ENCODE measurements at regions of chr11 and their contacts with region 1.

Region 1: DNA sequence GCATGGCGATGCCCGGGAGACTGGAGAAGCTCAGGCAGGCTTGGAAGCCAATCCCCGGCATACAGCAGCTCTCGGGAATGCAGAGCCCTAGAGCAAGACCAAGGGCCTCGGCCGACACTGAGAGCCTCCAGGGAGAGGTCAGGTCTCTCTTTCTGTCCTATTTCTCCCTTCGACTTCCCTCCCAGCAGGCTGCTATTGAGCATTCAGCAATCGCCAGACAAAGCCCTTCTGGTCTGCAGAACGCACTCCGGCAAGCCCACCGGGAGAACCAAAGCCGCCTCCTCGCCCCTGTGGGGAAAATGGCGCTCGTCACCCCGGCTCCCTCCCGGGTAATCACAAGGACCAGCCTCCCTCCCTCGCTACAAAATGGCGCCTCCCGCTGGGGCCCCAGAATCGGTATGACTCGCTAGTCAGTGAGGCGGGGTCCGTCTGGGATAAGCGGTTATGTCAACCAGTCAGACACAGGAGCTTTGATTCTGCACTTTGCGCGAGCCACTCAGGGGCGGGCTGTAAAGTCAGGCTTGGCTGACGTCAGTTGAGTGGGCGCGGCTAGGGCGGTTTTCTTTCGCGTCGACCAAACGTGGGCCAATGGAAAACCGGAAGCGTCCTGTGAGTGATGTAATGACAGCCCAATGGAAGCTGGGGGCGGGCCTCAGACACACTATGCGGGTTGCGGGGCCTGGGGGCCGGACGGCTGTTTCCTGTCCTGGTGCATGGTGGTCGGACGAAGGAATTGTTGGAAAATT is at the start of gene ZNF143:
- DNase-seq: peak; percentile 100
- H3K4me3 ChIP-seq: peak within 1 kb of the TSS; percentile 88
- CTCF ChIP-seq: peak in 1 of 3 donors; percentile 50
- POLR2A ChIP-seq: peak in 1 of 2 donors; percentile 93
- total RNA-seq, gene ZNF143: 17.8 to 44.2 (median 30.9) TPM

Region 2: GRCh38 chr11:9527481-9528140 is 67.1 kb after region 1 on chr11:
- intact Hi-C with region 1: loop called (anchors 10 kb)
- DNase-seq: peak in 1 of 2 donors; percentile 67
- H3K4me3 ChIP-seq: no peak overlapping the region
- CTCF ChIP-seq: no peak
- POLR2A ChIP-seq: no peak